ENCODE measurements at regions of chr19 and their contacts with region 1.

Region 1: GRCh38 chr19:53001761-53002160 is 12.0 kb upstream of the ERVV-1 start:
- DNase-seq: no peak
- ATAC-seq: no peak
- H3K4me3 ChIP-seq: no peak overlapping the region
- H3K27ac ChIP-seq: no peak overlapping the region
- H3K4me1 ChIP-seq: no peaks in the 10 kb centered on the region
- H3K27me3 ChIP-seq: no peaks in the 10 kb centered on the region
- CTCF ChIP-seq: no peak

Region 2: GRCh38 chr19:52959623-52960295 is 42.0 kb before region 1 on chr19:
- CTCF ChIA-PET with region 1: no interaction called
- POLR2A ChIA-PET with region 1: no interaction called
- in situ Hi-C with region 1: no loop called
- intact Hi-C with region 1: no loop called
- DNase-seq: no peak
- ATAC-seq: no peak
- H3K4me3 ChIP-seq: no peak overlapping the region
- H3K27ac ChIP-seq: no peak overlapping the region
- H3K4me1 ChIP-seq: no peaks in the 10 kb centered on the region; the same call in none of the 2 replicates
- H3K27me3 ChIP-seq: no peaks in the 10 kb centered on the region
- CTCF ChIP-seq: no peak

Region 3: GRCh38 chr19:53936029-53936428 is 934.3 kb after region 1 on chr19:
- CTCF ChIA-PET with region 1: interaction called, 11 read pairs
- POLR2A ChIA-PET with region 1: no interaction called
- in situ Hi-C with region 1: no loop called
- intact Hi-C with region 1: no loop called
- DNase-seq: no peak
- ATAC-seq: no peak
- H3K4me3 ChIP-seq: no peak overlapping the region
- H3K27ac ChIP-seq: no peak overlapping the region
- H3K4me1 ChIP-seq: no peaks in the 10 kb centered on the region
- H3K27me3 ChIP-seq: no peaks in the 10 kb centered on the region
- CTCF ChIP-seq: no peak